ENCODE measurements at regions of chr19 and their contacts with region 1.

Region 1: DNA sequence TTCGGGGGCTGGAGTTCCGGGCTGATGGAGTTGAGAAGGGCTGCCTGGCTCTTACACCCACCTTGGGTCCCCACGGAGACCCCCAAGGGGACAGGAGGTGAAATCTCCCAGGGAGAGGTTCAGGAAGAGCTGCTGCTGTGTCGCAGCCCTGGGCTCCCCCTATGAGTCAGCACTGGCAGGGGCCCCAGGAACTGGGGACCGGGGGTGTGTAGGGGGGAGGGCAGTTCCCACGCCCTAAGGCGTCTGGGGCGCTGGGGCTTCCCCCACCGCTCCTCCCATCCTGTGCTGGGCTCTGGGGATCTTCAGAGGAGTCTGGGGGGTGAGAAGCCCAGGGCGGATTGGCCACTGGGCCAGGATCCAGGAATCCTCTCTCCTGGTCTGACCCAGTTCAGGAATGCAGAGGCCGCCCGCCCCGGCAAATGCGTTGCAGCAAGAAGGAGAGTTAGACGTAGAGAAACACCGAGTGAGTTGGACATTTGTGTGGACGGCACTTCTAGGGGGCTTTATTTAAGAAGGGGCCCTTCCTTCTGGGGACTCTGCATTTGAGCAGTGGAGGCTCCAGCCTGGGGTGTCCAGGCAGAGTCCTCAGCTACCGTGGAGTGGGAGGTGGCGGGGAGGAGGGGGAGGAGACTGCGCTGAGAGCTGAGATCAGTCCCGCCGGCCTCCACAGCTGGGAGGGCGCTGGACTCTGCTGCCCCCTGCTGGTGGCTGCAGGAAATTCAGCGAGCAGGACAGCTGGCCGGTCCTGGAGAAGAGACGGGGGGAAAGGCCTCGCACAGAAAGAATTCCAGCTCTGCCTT is 15.0 kb upstream of the NANOS3 start:
- DNase-seq: peak; percentile 87 to 94
- H3K4me3 ChIP-seq: peak overlapping the region; percentile 10
- H3K4me1 ChIP-seq: peaks cover 6% of the 10 kb centered on the region
- H3K27me3 ChIP-seq: no peaks in the 10 kb centered on the region

Region 2: GRCh38 chr19:13784731-13785452 is 77.0 kb before region 1 on chr19:
- in situ Hi-C with region 1: loop called (anchors 5 kb)
- DNase-seq: peak; percentile 31 to 85
- H3K4me3 ChIP-seq: no peak overlapping the region
- H3K4me1 ChIP-seq: peaks cover 19% of the 10 kb centered on the region
- H3K27me3 ChIP-seq: peaks cover 6% of the 10 kb centered on the region; the same call in 1 of the 2 replicates

Region 3: GRCh38 chr19:14081325-14082093 is 219.6 kb after region 1 on chr19:
- in situ Hi-C with region 1: no loop called
- DNase-seq: peak; percentile 98 to 100
- H3K4me3 ChIP-seq: peak overlapping the region; percentile 52
- H3K4me1 ChIP-seq: peaks cover 5% of the 10 kb centered on the region
- H3K27me3 ChIP-seq: no peaks in the 10 kb centered on the region

Measured in HAP-1 (cell line).